Endothelial cell of umbilical vein (primary cell): ENCODE measurements at regions of chr13 and their contacts with region 1.

Region 1: DNA sequence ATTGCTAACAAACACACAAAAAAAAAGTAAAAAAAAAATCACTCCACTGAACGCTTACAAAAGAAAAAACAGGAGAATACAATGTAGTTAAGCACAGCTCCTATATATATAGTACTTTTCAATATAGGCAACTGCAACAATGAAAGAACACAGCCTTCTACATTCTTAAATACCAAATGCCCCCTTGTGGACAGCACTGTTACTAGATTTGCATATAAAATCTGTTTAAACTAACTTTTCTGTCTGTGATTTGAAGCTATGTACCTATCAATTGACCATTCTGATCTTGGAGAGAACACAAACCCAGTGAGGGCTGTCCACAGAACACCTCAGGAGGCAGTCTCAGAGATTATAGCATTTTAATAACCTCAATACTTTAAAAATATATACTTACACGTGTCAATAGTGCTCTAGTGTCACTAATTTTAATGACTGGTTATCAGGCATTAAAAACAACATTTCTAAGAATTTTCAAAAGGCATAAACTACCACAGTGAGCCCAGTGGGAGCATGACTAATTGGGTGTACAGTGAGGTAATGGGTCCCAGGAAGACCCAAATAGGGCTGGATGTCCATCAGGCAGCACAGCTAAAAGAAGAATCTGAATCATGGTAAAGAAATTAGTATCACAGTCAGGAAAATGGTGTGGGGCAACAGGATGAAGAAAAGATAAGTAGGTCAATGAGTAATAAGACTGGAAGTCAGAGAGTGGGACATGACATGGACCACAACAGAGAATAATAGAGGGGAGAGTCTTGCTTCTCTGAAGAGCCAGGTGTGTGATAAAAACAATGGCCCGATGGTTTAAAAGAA is 22.2 kb downstream of the CCDC169 start:
- DNase-seq: peak; percentile 64
- H3K4me3 ChIP-seq: no peak overlapping the region
- H3K27ac ChIP-seq: peak overlapping the region; percentile 53
- H3K4me1 ChIP-seq: peaks cover 14% of the 10 kb centered on the region
- H3K27me3 ChIP-seq: no peaks in the 10 kb centered on the region
- CTCF ChIP-seq: peak; percentile 40 to 49
- POLR2A ChIP-seq: no peak

Region 2: DNA sequence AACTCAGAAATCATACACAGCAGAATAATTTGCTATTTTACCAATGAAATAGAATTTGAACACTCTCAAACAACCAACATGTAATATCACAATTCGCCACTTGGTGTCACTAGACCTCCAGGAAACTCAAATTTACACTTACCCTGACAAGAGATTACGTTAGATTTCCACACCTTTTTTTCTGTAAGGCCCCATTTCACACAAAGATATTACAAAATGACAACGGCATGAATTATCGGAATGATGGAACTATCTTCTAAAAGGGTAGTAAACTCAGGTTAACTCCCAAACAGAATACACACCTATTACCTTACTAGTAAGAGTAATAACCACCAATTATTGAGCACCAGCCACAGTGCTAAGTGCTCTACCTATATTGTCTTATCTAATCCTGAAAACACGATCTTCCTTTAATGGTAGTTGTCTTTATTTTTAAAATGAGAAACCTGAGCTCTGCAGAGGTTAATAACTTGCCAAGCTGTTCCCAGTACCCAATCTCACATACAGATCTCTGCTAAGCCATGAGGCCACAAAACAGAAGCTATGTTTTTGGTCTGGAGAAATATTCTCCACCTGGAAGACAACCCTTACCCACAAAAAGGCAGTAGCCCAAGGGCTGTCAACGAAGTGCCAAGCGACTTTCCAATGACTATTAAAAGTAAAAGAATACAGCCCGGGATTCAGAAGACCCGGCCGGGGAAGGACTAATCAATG is 296.6 kb before region 1 on chr13:
- CTCF ChIA-PET with region 1: interaction called, 482 read pairs
- POLR2A ChIA-PET with region 1: interaction called, 4 read pairs
- dilution Hi-C with region 1: no loop called
- intact Hi-C with region 1: loop called (anchors 1 kb)
- DNase-seq: peak; percentile 78
- H3K4me3 ChIP-seq: no peak overlapping the region
- H3K27ac ChIP-seq: no peak overlapping the region
- H3K4me1 ChIP-seq: peaks cover 7% of the 10 kb centered on the region
- H3K27me3 ChIP-seq: no peaks in the 10 kb centered on the region
- CTCF ChIP-seq: peak; percentile 35 to 50
- POLR2A ChIP-seq: no peak

Region 3: GRCh38 chr13:36088014-36088413 is 187.4 kb before region 1 on chr13:
- CTCF ChIA-PET with region 1: interaction called, 5 read pairs
- POLR2A ChIA-PET with region 1: no interaction called
- dilution Hi-C with region 1: no loop called
- intact Hi-C with region 1: loop called (anchors 10 kb)
- DNase-seq: no peak
- H3K4me3 ChIP-seq: no peak overlapping the region
- H3K27ac ChIP-seq: no peak overlapping the region
- H3K4me1 ChIP-seq: no peaks in the 10 kb centered on the region
- H3K27me3 ChIP-seq: no peaks in the 10 kb centered on the region
- CTCF ChIP-seq: no peak
- POLR2A ChIP-seq: no peak

Region 4: DNA sequence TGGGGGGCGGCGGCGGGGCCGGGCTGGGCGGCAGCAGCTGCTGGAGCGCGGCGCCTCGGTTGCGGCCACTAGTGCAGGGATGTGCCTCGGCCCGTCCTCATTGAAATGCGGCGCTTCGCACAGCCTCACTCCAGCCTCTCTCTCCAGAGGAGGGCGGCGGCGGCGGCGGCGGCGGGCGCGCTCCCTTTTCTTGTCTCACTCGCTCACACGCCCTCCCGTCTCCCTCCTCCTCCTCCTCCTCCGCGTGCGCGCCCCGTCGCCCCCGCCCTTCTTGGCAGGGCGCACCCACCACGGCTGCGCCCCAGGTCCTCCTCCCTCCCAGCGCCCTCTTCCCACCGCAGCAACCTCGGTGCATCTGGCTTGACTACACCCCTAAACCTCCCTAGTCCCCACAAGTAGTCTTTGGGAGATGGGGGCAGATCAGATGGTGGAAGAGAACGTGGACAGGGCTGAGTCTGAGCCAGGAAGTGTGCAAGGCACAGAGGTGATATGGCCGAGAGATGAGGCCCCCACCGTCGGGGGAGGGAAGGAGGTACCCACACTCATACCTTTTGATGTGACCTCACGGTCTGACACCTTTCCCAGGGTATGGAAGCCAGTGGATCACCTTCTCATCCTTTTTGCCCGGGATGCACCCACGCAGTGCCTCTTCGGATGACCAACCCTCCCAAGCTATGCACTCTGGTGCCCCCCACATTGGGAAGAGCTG is 144.0 kb before region 1 on chr13 and contains the start of gene DCLK1:
- CTCF ChIA-PET with region 1: interaction called, 7 read pairs
- POLR2A ChIA-PET with region 1: no interaction called
- dilution Hi-C with region 1: no loop called
- intact Hi-C with region 1: loop called (anchors 5 kb)
- DNase-seq: no peak
- H3K4me3 ChIP-seq: peak within 1 kb of the TSS in 2 of 3 experiments; percentile 20 to 31
- H3K27ac ChIP-seq: no peak within 1 kb of the TSS
- H3K4me1 ChIP-seq: peaks cover 6% of the 10 kb centered on the region
- H3K27me3 ChIP-seq: peaks cover 19 to 24% of the 10 kb centered on the region in 2 experiments
- CTCF ChIP-seq: no peak
- POLR2A ChIP-seq: no peak
- total RNA-seq, gene DCLK1: 3.9 and 4.5 TPM in 2 replicates

Region 5: GRCh38 chr13:36261976-36262375 is 13.4 kb before region 1 on chr13:
- CTCF ChIA-PET with region 1: interaction called, 33 read pairs
- POLR2A ChIA-PET with region 1: no interaction called
- dilution Hi-C with region 1: no loop called
- intact Hi-C with region 1: no loop called
- DNase-seq: no peak
- H3K4me3 ChIP-seq: no peak overlapping the region
- H3K27ac ChIP-seq: no peak overlapping the region
- H3K4me1 ChIP-seq: no peaks in the 10 kb centered on the region
- H3K27me3 ChIP-seq: no peaks in the 10 kb centered on the region
- CTCF ChIP-seq: no peak
- POLR2A ChIP-seq: no peak

Region 6: DNA sequence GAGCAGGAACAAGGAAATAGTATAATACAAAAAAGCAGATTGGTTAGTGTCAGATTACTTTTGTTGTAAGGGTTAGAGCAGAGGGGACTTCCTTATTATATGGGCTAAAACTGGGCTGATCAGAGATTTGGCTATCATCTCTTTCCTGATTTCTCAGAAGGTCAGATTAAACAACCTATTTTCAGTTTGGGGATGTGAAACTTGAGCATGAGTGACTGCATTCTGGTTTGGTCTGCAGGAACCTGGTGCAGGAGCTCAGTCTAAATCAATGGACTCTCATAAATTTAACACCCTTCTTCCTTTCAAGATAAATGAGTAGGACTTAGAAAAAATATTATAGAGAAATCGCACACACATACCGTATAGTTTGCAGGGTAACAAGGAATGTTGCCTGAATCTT is 530.7 kb after region 1 on chr13:
- CTCF ChIA-PET with region 1: no interaction called
- POLR2A ChIA-PET with region 1: no interaction called
- dilution Hi-C with region 1: no loop called
- intact Hi-C with region 1: no loop called
- DNase-seq: no peak
- H3K4me3 ChIP-seq: no peak overlapping the region
- H3K27ac ChIP-seq: no peak overlapping the region
- H3K4me1 ChIP-seq: no peaks in the 10 kb centered on the region
- H3K27me3 ChIP-seq: peaks cover 6 to 16% of the 10 kb centered on the region in 2 experiments
- CTCF ChIP-seq: no peak
- POLR2A ChIP-seq: no peak